ENCODE measurements at regions of chr14 and their contacts with region 1.

Region 1: DNA sequence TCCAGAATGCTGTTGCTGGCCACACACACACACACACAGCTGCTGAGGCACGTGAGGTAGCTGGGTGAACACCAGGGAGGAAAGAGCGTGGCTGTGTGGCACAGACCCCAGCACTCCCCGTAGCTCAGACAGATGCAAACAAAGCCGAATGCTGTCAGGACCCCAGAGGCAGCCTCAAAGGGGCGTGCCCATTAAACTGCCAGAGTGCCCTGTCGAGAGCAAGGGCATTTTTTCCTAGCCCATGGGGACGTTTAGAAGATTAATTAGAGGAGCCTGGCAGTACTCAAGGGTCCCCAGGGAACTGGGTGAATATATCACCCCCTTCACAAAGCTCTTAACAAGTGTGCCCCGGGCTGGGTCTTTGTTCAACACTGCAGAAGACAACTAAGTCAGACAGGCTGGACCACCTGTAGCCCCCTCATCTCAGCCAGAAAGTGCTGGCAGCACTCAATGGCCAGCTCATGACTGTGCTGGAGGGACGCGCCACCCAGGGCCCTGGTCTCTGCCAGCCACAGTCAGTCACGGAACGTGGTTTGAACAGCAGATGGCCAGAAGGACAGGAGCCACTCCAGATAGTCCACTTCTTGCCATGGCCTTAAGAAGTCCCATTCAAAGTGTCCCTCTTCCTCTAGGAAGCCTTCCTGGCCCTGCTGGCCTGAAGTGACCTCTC is 37.5 kb downstream of the TTC7B start:
- DNase-seq: no peak
- ATAC-seq: no peak
- H3K4me3 ChIP-seq: no peak overlapping the region
- H3K27ac ChIP-seq: no peak overlapping the region
- H3K4me1 ChIP-seq: peaks cover 2 to 6% of the 10 kb centered on the region in 2 experiments; a peak in 3 of 5 replicates
- H3K27me3 ChIP-seq: no peaks in the 10 kb centered on the region
- CTCF ChIP-seq: no peak
- EP300 ChIP-seq: no peak
- POLR2A ChIP-seq: no peak
- RAD21 ChIP-seq: no peak

Region 2: DNA sequence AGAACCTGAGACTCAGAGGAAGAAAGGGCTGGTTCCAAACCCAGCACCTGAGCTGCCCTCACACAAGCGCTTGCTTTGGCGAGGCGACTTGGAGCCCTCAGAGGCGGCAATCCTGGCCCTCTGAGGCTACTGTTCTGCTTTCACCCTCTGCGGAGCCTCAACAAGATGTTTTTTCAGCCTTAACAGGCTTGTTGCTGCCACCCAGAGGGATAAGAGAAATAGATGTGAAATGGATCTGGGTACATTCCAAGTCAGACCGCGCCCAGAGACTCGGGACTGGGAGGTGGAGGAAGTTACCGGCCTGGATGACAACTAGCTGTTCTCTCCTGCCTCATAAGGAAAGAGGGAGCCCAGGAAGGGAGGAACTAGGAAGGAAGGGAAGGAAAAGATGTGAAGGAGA is 52.0 kb before region 1 on chr14:
- CTCF ChIA-PET with region 1: no interaction called
- POLR2A ChIA-PET with region 1: no interaction called
- in situ Hi-C with region 1: no loop called
- intact Hi-C with region 1: no loop called
- DNase-seq: no peak
- ATAC-seq: no peak
- H3K4me3 ChIP-seq: no peak overlapping the region
- H3K27ac ChIP-seq: no peak overlapping the region
- H3K4me1 ChIP-seq: no peaks in the 10 kb centered on the region; a peak in 1 of 5 replicates
- H3K27me3 ChIP-seq: no peaks in the 10 kb centered on the region
- CTCF ChIP-seq: no peak
- EP300 ChIP-seq: no peak
- POLR2A ChIP-seq: no peak
- RAD21 ChIP-seq: no peak

Region 3: GRCh38 chr14:90839024-90839888 is 60.5 kb after region 1 on chr14:
- CTCF ChIA-PET with region 1: no interaction called
- POLR2A ChIA-PET with region 1: no interaction called
- in situ Hi-C with region 1: no loop called
- intact Hi-C with region 1: no loop called
- DNase-seq: no peak
- ATAC-seq: peak; percentile 44
- H3K4me3 ChIP-seq: no peak overlapping the region
- H3K27ac ChIP-seq: no peak overlapping the region
- H3K4me1 ChIP-seq: peaks cover 4 to 5% of the 10 kb centered on the region in 2 experiments; a peak in 3 of 5 replicates
- H3K27me3 ChIP-seq: no peaks in the 10 kb centered on the region
- CTCF ChIP-seq: no peak
- EP300 ChIP-seq: no peak
- POLR2A ChIP-seq: no peak
- RAD21 ChIP-seq: no peak

Region 4: DNA sequence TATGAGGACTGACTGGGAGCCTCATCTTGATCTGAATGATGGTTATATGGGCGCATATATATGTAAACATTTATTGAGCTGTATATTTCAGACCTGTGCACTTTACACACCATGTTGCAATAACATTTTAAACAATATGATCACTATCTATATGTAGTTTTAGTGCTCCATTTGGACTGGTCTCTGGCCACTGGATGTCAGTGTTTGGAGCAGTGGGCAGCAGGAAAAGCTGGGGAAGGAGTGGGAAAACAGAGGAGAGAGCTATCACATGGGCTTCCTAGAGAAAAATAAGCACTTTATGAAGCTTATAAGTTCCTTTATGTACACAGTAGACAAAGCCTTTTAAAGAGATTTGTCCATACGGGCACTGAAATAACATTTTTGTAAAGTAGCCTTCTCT is 86.8 kb after region 1 on chr14:
- CTCF ChIA-PET with region 1: no interaction called
- POLR2A ChIA-PET with region 1: no interaction called
- in situ Hi-C with region 1: no loop called
- intact Hi-C with region 1: no loop called
- DNase-seq: no peak
- ATAC-seq: no peak
- H3K4me3 ChIP-seq: no peak overlapping the region
- H3K27ac ChIP-seq: no peak overlapping the region
- H3K4me1 ChIP-seq: no peaks in the 10 kb centered on the region
- H3K27me3 ChIP-seq: no peaks in the 10 kb centered on the region
- CTCF ChIP-seq: no peak
- EP300 ChIP-seq: no peak
- POLR2A ChIP-seq: no peak
- RAD21 ChIP-seq: no peak

Region 5: GRCh38 chr14:90894241-90894640 is 115.5 kb after region 1 on chr14:
- CTCF ChIA-PET with region 1: no interaction called
- POLR2A ChIA-PET with region 1: no interaction called
- in situ Hi-C with region 1: no loop called
- intact Hi-C with region 1: loop called (anchors 10 kb)
- DNase-seq: no peak
- ATAC-seq: no peak
- H3K4me3 ChIP-seq: no peak overlapping the region
- H3K27ac ChIP-seq: no peak overlapping the region
- H3K4me1 ChIP-seq: no peaks in the 10 kb centered on the region
- H3K27me3 ChIP-seq: no peaks in the 10 kb centered on the region
- CTCF ChIP-seq: no peak
- EP300 ChIP-seq: no peak
- POLR2A ChIP-seq: no peak
- RAD21 ChIP-seq: no peak